ENCODE measurements at regions of chr1 and their contacts with region 1.

Region 1: DNA sequence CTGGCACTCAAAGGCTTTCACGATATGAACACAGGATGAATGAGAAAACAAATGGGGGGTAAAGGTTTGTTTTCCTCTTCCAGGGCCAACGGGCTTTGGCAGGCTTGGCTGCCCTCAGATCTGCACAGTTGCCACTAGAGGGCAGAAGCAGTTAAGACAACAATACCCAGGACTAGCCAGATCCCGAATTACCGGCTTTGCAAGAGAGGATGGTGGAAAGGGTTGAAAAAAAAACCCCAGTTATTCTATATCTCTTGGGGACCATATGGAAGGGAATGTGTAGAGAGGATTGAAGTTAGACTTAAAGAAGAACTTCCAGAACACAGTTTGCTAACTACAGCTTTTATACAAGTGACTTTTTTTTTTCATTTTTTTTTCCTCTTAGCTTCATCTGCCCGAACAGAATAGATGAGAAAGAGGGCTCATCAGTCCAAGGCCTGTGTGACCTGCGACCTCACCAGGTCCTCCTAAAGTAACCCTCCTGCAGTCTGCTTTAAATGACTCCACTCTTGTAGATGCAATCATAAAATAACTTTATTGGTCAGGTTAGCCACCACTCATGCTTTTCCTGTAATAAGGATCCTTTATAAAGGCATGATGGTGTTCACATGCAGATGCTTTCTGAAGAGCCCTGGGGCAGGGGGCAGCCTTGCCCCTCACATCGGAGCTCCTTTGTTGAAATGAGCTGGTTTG is 10.7 kb downstream of the FMOD start:
- DNase-seq: peak in 8 of 9 experiments; percentile 35 to 83 (median 60)
- ATAC-seq: peak; percentile 72
- H3K4me3 ChIP-seq: no peak overlapping the region
- H3K4me3 Mint-ChIP-seq: no peak overlapping the region
- H3K27ac ChIP-seq: no peak overlapping the region
- H3K27ac Mint-ChIP-seq: no peak overlapping the region
- H3K4me1 ChIP-seq: peaks cover 16% of the 10 kb centered on the region
- H3K4me1 Mint-ChIP-seq: peaks cover 25% of the 10 kb centered on the region
- H3K27me3 ChIP-seq: no peaks in the 10 kb centered on the region
- H3K27me3 Mint-ChIP-seq: peaks cover 8% of the 10 kb centered on the region
- CTCF ChIP-seq: peak; percentile 91

Region 2: DNA sequence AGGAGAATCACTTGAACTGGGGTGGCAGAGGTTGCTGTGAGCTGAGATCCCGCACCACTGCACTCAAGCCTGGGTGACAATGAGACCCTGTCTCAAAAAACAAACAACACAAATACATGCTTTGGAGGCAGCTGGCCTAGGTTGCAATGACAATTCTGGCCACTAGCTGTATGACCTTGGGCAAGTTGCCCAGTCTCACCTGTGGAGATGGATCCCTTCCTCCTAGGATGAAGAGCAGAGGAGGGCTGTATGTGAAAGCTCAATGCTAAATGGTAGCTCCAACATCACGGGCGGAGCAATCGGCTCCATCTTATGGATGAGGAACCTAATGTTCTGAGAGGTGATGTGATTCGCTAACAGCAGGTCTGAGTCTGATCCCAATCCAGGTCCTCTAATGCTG is 192.1 kb before region 1 on chr1:
- CTCF ChIA-PET with region 1: no interaction called
- POLR2A ChIA-PET with region 1: no interaction called
- intact Hi-C with region 1: no loop called
- DNase-seq: no peak
- ATAC-seq: no peak
- H3K4me3 ChIP-seq: no peak overlapping the region
- H3K4me3 Mint-ChIP-seq: no peak overlapping the region
- H3K27ac ChIP-seq: no peak overlapping the region
- H3K27ac Mint-ChIP-seq: no peak overlapping the region
- H3K4me1 ChIP-seq: no peaks in the 10 kb centered on the region
- H3K4me1 Mint-ChIP-seq: no peaks in the 10 kb centered on the region
- H3K27me3 ChIP-seq: no peaks in the 10 kb centered on the region
- H3K27me3 Mint-ChIP-seq: peaks cover 3% of the 10 kb centered on the region
- CTCF ChIP-seq: no peak

Region 3: DNA sequence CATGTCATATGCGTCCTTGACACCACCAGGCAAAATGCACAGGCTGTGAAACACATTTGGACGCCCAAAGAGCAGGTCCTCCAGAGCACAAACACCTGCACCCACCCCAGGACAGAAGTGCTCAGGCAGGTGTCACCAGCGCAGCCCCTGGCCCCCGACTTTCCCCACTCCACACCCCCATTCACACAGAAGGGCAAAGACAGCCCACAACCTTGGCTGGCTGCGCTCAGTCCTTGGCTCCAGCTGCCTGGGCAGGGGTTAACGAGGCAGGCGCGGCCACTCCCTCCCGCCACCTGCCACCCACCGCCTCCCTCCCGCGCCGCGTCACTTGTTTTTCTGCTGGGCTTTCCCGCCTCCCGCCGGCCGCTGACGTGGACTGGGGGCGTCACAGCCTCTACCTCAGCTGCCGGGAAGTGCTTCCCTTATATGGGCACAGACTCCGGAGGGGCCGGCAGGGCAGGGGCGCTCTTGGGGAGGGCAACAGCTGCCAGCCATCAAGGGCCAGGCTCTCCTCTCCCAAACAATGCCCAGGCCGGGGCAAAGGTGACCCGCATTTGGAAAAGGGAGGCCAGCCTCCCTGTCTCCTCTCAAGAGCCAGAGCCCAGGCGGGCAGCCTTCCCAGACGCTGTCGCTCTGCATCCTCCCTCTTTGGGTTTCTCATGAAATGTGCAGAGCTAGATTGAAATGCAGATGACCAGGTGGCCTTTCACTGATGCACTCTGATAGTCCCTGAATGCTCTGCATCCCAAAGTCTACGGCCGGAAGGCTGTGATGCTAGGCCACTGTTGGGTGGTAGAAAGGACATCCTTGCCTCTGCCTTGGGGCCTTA is 49.8 kb before region 1 on chr1:
- CTCF ChIA-PET with region 1: interaction called, 174 read pairs
- POLR2A ChIA-PET with region 1: interaction called, 6 read pairs
- intact Hi-C with region 1: no loop called
- DNase-seq: peak; percentile 94 to 99 (median 98)
- ATAC-seq: peak; percentile 60
- H3K4me3 ChIP-seq: peak overlapping the region; percentile 29 to 61
- H3K4me3 Mint-ChIP-seq: peak overlapping the region; percentile 72
- H3K27ac ChIP-seq: peak overlapping the region; percentile 99 to 100
- H3K27ac Mint-ChIP-seq: peak overlapping the region; percentile 98
- H3K4me1 ChIP-seq: peaks cover 67% of the 10 kb centered on the region
- H3K4me1 Mint-ChIP-seq: peaks cover 85% of the 10 kb centered on the region
- H3K27me3 ChIP-seq: no peaks in the 10 kb centered on the region
- H3K27me3 Mint-ChIP-seq: no peaks in the 10 kb centered on the region
- CTCF ChIP-seq: no peak

Region 4: GRCh38 chr1:203320591-203321272 is 19.5 kb before region 1 on chr1:
- CTCF ChIA-PET with region 1: interaction called, 263 read pairs
- POLR2A ChIA-PET with region 1: interaction called, 12 read pairs
- intact Hi-C with region 1: no loop called
- DNase-seq: peak; percentile 50 to 91 (median 82)
- ATAC-seq: peak; percentile 62
- H3K4me3 ChIP-seq: peak overlapping the region in 1 of 2 experiments; percentile 12
- H3K4me3 Mint-ChIP-seq: peak overlapping the region; percentile 69
- H3K27ac ChIP-seq: peak overlapping the region; percentile 53 to 80
- H3K27ac Mint-ChIP-seq: peak overlapping the region; percentile 93
- H3K4me1 ChIP-seq: peaks cover 73% of the 10 kb centered on the region
- H3K4me1 Mint-ChIP-seq: peaks cover 88% of the 10 kb centered on the region
- H3K27me3 ChIP-seq: no peaks in the 10 kb centered on the region
- H3K27me3 Mint-ChIP-seq: no peaks in the 10 kb centered on the region
- CTCF ChIP-seq: no peak

Region 5: GRCh38 chr1:203351037-203352013 is 11.1 kb after region 1 on chr1 and contains the start of gene FMOD:
- CTCF ChIA-PET with region 1: interaction called, 58 read pairs
- POLR2A ChIA-PET with region 1: interaction called, 3 read pairs
- intact Hi-C with region 1: no loop called
- DNase-seq: peak in 1 of 9 experiments; percentile 22
- ATAC-seq: no peak
- H3K4me3 ChIP-seq: no peak within 1 kb of the TSS
- H3K4me3 Mint-ChIP-seq: peak within 1 kb of the TSS; percentile 38
- H3K27ac ChIP-seq: no peak within 1 kb of the TSS
- H3K27ac Mint-ChIP-seq: no peak within 1 kb of the TSS
- H3K4me1 ChIP-seq: no peaks in the 10 kb centered on the region
- H3K4me1 Mint-ChIP-seq: peaks cover 2% of the 10 kb centered on the region
- H3K27me3 ChIP-seq: no peaks in the 10 kb centered on the region
- H3K27me3 Mint-ChIP-seq: peaks cover 28% of the 10 kb centered on the region
- CTCF ChIP-seq: no peak
- total RNA-seq, gene FMOD: not detected

Region 6: GRCh38 chr1:203742436-203742835 is 402.2 kb after region 1 on chr1:
- CTCF ChIA-PET with region 1: no interaction called
- POLR2A ChIA-PET with region 1: no interaction called
- intact Hi-C with region 1: no loop called
- DNase-seq: no peak
- ATAC-seq: no peak
- H3K4me3 ChIP-seq: no peak overlapping the region
- H3K4me3 Mint-ChIP-seq: no peak overlapping the region
- H3K27ac ChIP-seq: no peak overlapping the region
- H3K27ac Mint-ChIP-seq: peak overlapping the region; percentile 30
- H3K4me1 ChIP-seq: peaks cover 11% of the 10 kb centered on the region
- H3K4me1 Mint-ChIP-seq: peaks cover 22% of the 10 kb centered on the region
- H3K27me3 ChIP-seq: no peaks in the 10 kb centered on the region
- H3K27me3 Mint-ChIP-seq: no peaks in the 10 kb centered on the region
- CTCF ChIP-seq: no peak

Region 7: DNA sequence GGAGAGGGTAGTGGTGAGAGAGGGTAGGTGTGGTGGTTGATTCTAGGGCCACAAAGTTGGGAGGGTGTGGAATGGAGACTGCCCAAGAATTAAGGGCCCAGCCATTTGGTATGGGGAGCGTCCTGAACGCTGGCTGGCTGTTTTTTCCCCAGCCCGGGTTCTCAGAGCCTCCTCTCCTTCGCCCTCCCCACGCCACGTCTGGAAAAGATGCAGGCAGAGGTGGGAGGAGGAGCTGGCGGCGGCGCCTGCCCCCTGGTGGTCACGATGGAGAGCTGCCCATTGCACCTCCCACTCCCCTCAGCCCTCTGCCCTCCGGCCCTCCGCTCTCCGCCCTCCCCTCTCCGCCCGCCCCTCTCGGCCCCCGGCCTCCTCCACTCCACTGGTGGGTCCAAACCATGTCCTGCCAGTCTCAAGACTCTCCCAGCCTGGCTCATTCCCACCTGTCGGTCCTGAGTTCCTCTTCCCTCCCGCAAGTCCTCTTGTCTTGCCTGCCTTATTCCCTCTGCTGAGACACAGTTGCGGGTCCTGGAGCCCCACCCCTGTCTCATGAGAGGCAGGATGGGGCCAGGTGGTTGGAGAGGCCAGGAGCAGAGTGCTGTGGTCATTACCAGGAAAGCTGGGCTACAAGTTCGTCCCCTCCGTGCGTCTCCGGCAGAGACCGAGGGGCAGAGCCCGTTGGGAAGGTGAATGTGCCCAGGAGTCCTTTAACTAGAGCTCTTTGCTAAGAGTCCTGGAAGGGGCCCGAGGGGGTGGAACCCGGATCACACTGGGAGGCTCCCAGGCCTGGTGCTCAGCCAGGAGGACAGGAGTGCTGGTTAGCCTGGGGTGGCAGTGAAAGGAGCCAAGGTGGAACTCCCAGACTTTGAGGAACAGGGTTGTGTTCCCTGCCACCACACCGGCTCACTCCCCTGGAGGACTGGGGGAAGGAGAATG is 789.0 kb after region 1 on chr1:
- CTCF ChIA-PET with region 1: no interaction called
- POLR2A ChIA-PET with region 1: no interaction called
- intact Hi-C with region 1: loop called in 1 of 2 experiments (anchors 2 kb)
- DNase-seq: peak; percentile 27 to 82 (median 57)
- ATAC-seq: peak; percentile 89
- H3K4me3 ChIP-seq: no peak overlapping the region
- H3K4me3 Mint-ChIP-seq: no peak overlapping the region
- H3K27ac ChIP-seq: no peak overlapping the region
- H3K27ac Mint-ChIP-seq: no peak overlapping the region
- H3K4me1 ChIP-seq: peaks cover 7% of the 10 kb centered on the region
- H3K4me1 Mint-ChIP-seq: peaks cover 10% of the 10 kb centered on the region
- H3K27me3 ChIP-seq: no peaks in the 10 kb centered on the region
- H3K27me3 Mint-ChIP-seq: no peaks in the 10 kb centered on the region
- CTCF ChIP-seq: peak; percentile 71

Measured in CD8-positive, alpha-beta T cell (primary cell).